Caco-2 (cell line): ENCODE measurements at regions of chr20 and their contacts with region 1.

Region 1: GRCh38 chr20:23231596-23232581 is 118.7 kb upstream of the NXT1 start:
- DNase-seq: peak; percentile 62 to 81
- H3K4me3 ChIP-seq: no peak overlapping the region
- H3K4me3 Mint-ChIP-seq: peak overlapping the region; percentile 37
- H3K27ac Mint-ChIP-seq: peak overlapping the region; percentile 92
- H3K4me1 ChIP-seq: peaks cover 57% of the 10 kb centered on the region
- H3K4me1 Mint-ChIP-seq: peaks cover 52% of the 10 kb centered on the region
- H3K27me3 ChIP-seq: no peaks in the 10 kb centered on the region
- H3K27me3 Mint-ChIP-seq: no peaks in the 10 kb centered on the region
- CTCF ChIP-seq: no peak

Region 2: GRCh38 chr20:23021951-23022350 is 209.9 kb before region 1 on chr20:
- CTCF ChIA-PET with region 1: interaction called, 4 read pairs
- POLR2A ChIA-PET with region 1: no interaction called
- intact Hi-C with region 1: loop called (anchors 1 kb)
- DNase-seq: no peak
- H3K4me3 ChIP-seq: no peak overlapping the region
- H3K4me3 Mint-ChIP-seq: no peak overlapping the region
- H3K27ac Mint-ChIP-seq: peak overlapping the region; percentile 84
- H3K4me1 ChIP-seq: peaks cover 73% of the 10 kb centered on the region
- H3K4me1 Mint-ChIP-seq: peaks cover 54% of the 10 kb centered on the region
- H3K27me3 ChIP-seq: no peaks in the 10 kb centered on the region
- H3K27me3 Mint-ChIP-seq: no peaks in the 10 kb centered on the region
- CTCF ChIP-seq: no peak

Region 3: GRCh38 chr20:23212064-23212463 is 19.8 kb before region 1 on chr20:
- CTCF ChIA-PET with region 1: interaction called, 8 read pairs
- POLR2A ChIA-PET with region 1: no interaction called
- intact Hi-C with region 1: loop called (anchors 1 kb)
- DNase-seq: peak; percentile 72 to 77
- H3K4me3 ChIP-seq: no peak overlapping the region
- H3K4me3 Mint-ChIP-seq: peak overlapping the region; percentile 13
- H3K27ac Mint-ChIP-seq: peak overlapping the region; percentile 88
- H3K4me1 ChIP-seq: peaks cover 21% of the 10 kb centered on the region
- H3K4me1 Mint-ChIP-seq: peaks cover 34% of the 10 kb centered on the region
- H3K27me3 ChIP-seq: no peaks in the 10 kb centered on the region
- H3K27me3 Mint-ChIP-seq: no peaks in the 10 kb centered on the region
- CTCF ChIP-seq: no peak

Region 4: GRCh38 chr20:23242104-23242930 is 10.4 kb after region 1 on chr20:
- CTCF ChIA-PET with region 1: interaction called, 9 read pairs
- POLR2A ChIA-PET with region 1: no interaction called
- intact Hi-C with region 1: loop called (anchors 1 kb)
- DNase-seq: peak; percentile 48 to 55
- H3K4me3 ChIP-seq: no peak overlapping the region
- H3K4me3 Mint-ChIP-seq: no peak overlapping the region
- H3K27ac Mint-ChIP-seq: no peak overlapping the region
- H3K4me1 ChIP-seq: no peaks in the 10 kb centered on the region; the same call in 1 of the 2 replicates
- H3K4me1 Mint-ChIP-seq: peaks cover 8% of the 10 kb centered on the region
- H3K27me3 ChIP-seq: no peaks in the 10 kb centered on the region
- H3K27me3 Mint-ChIP-seq: no peaks in the 10 kb centered on the region
- CTCF ChIP-seq: no peak

Region 5: GRCh38 chr20:23320317-23320716 is 88.4 kb after region 1 on chr20:
- CTCF ChIA-PET with region 1: interaction called, 19 read pairs
- POLR2A ChIA-PET with region 1: no interaction called
- intact Hi-C with region 1: no loop called
- DNase-seq: peak in 1 of 2 experiments; percentile 39
- H3K4me3 ChIP-seq: no peak overlapping the region
- H3K4me3 Mint-ChIP-seq: no peak overlapping the region
- H3K27ac Mint-ChIP-seq: no peak overlapping the region
- H3K4me1 ChIP-seq: no peaks in the 10 kb centered on the region
- H3K4me1 Mint-ChIP-seq: peaks cover 2% of the 10 kb centered on the region
- H3K27me3 ChIP-seq: no peaks in the 10 kb centered on the region
- H3K27me3 Mint-ChIP-seq: no peaks in the 10 kb centered on the region
- CTCF ChIP-seq: peak; percentile 58 to 63